OCI-LY7 (cell line): ENCODE measurements at regions of chr6 and their contacts with region 1.

Region 1: GRCh38 chr6:13336553-13336952 is 8.2 kb upstream of the TBC1D7 start:
- DNase-seq: peak; percentile 74
- H3K4me3 ChIP-seq: no peak overlapping the region
- H3K27ac ChIP-seq: no peak overlapping the region
- H3K4me1 ChIP-seq: peaks cover 25% of the 10 kb centered on the region
- CTCF ChIP-seq: peak; percentile 96

Region 2: GRCh38 chr6:13375360-13375878 is 38.9 kb after region 1 on chr6:
- CTCF ChIA-PET with region 1: no interaction called
- POLR2A ChIA-PET with region 1: interaction called, 4 read pairs
- intact Hi-C with region 1: loop called (anchors 2 kb)
- DNase-seq: peak; percentile 72
- H3K4me3 ChIP-seq: peak overlapping the region; percentile 13
- H3K27ac ChIP-seq: peak overlapping the region; percentile 30
- H3K4me1 ChIP-seq: peaks cover 59% of the 10 kb centered on the region
- CTCF ChIP-seq: no peak

Region 3: GRCh38 chr6:13407709-13408695 is 71.4 kb after region 1 on chr6:
- CTCF ChIA-PET with region 1: no interaction called
- POLR2A ChIA-PET with region 1: no interaction called
- intact Hi-C with region 1: no loop called
- DNase-seq: no peak
- H3K4me3 ChIP-seq: no peak overlapping the region
- H3K27ac ChIP-seq: no peak overlapping the region
- H3K4me1 ChIP-seq: no peaks in the 10 kb centered on the region
- CTCF ChIP-seq: no peak

Region 4: DNA sequence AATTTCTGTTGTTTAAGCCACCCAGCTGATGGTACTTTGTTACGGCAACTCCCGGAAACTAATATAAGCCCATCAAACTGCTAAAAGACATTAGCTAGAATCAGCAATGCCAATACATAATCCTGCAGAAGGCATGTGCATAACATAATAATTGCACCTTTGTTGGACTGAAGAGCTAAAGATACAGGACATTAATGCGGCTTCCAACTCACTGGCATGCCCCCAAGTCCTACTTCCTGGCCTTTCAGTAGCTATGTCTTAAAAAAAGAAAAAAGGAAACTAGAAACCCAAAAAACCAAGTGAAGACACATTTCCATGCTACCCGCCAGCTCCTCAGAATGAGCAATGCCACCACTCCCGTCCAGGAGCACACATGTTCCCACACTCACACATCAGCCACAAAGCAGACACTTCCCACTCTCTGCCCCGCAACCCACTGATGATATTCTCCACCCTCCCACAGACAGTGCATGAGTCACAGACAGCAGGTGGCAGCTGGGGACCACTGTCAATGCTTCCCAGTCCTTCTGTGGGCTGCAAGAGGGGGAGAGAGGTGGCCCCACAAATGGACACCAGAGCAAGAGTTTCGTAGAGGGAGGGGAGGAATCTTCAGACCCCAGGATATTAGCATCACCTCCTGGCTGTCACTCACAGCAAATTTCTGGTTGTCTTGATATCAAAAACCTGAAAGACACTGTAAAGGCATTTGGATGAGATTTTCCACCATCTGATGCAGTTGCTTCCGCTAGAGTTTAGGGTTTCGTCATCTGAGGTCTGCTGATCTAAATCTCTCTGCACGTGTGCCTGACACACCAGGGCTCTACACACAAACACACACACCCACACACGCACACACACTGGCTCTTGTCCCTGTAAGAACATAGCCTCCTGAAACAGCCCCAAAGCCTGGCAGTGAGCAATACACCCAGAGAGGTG is 118.0 kb after region 1 on chr6:
- CTCF ChIA-PET with region 1: interaction called, 3 read pairs
- POLR2A ChIA-PET with region 1: interaction called, 5 read pairs
- intact Hi-C with region 1: loop called (anchors 2 kb)
- DNase-seq: peak; percentile 41
- H3K4me3 ChIP-seq: peak overlapping the region; percentile 6
- H3K27ac ChIP-seq: peak overlapping the region; percentile 28
- H3K4me1 ChIP-seq: peaks cover 60% of the 10 kb centered on the region
- CTCF ChIP-seq: peak; percentile 68

Region 5: DNA sequence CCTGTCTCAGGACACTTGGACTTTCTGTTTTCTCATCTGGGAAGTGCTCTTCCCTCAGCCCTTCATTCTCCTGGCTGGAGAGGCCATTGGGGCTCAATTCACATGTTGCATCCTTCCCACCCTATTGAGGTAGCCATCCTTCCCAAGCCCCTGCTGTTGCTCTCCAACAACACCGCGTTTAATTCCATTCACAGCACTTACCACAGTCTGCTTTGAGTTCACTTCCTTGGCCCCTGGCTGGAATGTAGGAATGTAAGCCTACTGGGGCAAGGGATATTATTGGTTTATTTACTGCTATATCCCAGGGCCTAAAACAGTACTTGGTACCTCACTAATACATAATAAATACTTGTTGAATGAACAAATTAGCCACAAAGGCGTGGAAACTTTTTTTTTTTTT is 157.6 kb after region 1 on chr6:
- CTCF ChIA-PET with region 1: no interaction called
- POLR2A ChIA-PET with region 1: no interaction called
- intact Hi-C with region 1: no loop called
- DNase-seq: no peak
- H3K4me3 ChIP-seq: no peak overlapping the region
- H3K27ac ChIP-seq: no peak overlapping the region
- H3K4me1 ChIP-seq: no peaks in the 10 kb centered on the region
- CTCF ChIP-seq: no peak

Region 6: DNA sequence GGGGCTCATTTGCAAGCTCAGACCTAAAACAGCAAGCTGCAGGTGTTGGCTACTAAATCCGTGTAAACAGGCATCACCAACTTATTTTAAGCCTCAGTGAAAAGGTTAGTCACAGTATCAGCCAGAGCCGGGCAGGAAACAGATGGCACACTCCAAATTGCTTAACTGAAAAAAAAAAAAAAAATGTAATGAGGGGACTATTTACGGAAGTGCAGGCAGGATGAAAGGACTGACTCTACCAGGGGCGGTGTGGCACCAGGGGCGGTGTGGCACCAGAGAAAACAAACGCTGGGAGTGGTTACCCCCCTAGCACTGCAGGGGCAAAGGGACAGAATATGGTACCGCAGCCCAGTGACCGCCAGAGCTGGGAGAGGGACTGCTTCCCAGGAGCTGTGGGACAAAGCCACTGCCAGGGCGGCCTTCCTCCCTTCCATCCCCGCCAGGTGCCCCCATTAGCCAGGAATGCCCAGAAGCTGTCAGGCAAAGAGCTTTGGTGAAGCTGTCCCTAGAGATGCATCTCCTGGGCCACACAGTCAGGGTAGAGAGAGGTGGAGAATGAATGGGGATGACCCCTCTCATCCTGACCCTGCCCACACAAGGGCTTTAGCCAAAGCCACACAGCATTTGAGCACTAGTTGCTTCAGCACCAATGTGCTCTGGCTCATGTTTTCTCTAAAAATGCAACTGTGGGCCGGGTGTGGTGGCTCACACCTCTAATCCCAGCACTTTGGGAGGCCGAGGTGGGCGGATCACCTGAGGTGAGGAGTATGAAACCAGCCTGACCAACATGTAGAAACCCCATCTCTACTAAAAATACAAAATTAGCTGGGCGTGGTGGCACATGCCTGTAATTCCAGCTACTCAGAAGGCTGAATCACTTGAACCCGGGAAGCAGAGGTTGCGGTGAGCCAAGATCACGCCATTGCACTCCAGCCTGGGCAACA is 190.4 kb after region 1 on chr6:
- CTCF ChIA-PET with region 1: no interaction called
- POLR2A ChIA-PET with region 1: interaction called, 5 read pairs
- intact Hi-C with region 1: loop called (anchors 2 kb)
- DNase-seq: peak; percentile 98
- H3K4me3 ChIP-seq: peak overlapping the region; percentile 59
- H3K27ac ChIP-seq: peak overlapping the region; percentile 99
- H3K4me1 ChIP-seq: peaks cover 84% of the 10 kb centered on the region
- CTCF ChIP-seq: peak; percentile 55

Region 7: DNA sequence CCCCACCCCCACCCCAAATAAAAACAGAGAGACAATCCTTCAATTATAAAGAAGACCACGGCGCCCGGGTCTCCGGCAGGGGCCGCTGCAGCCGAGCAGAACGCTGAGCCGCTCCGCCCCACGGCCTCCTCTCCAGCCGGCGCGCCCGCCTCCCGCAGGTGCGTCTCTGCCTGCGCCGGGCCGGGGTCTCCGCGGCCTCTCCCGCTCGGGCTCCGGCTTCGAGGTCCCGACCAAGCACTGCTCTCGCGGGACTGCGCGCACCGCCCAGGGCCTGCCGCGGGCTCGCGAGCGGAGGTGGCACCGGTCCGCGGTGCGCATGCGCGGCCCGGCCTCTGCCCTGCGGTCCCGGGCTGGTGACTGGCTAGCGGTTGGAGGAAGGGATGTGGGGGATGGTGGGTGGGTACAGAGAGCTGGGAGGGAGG is 237.6 kb after region 1 on chr6:
- CTCF ChIA-PET with region 1: no interaction called
- POLR2A ChIA-PET with region 1: interaction called, 4 read pairs
- intact Hi-C with region 1: loop called (anchors 1 kb)
- DNase-seq: peak; percentile 98
- H3K4me3 ChIP-seq: peak overlapping the region; percentile 76
- H3K27ac ChIP-seq: peak overlapping the region; percentile 89
- H3K4me1 ChIP-seq: peaks cover 23% of the 10 kb centered on the region
- CTCF ChIP-seq: peak; percentile 64

Region 8: DNA sequence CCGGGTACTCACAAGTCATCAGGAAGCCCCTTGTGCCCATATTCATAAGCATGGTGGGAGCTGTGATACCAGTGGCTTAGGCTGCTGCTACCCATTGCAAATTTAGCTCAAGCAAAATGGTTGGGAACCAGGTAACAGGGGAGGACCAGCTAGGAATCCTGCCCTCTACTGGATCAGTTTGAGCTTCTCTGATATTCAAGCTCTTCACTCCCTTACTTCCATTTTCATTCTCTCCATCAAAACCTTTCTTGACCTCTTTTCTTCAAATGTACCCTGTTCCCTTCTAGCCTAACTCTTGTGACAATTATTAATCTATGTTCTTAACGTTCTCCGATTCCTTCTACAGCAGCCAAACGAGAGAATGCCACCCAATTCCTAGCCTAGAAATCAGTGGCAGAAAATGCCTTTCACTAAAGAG is 288.3 kb after region 1 on chr6:
- CTCF ChIA-PET with region 1: no interaction called
- POLR2A ChIA-PET with region 1: no interaction called
- intact Hi-C with region 1: loop called (anchors 1 kb)
- DNase-seq: peak; percentile 67
- H3K4me3 ChIP-seq: no peak overlapping the region
- H3K27ac ChIP-seq: no peak overlapping the region
- H3K4me1 ChIP-seq: peaks cover 5% of the 10 kb centered on the region
- CTCF ChIP-seq: peak; percentile 86

Region 9: DNA sequence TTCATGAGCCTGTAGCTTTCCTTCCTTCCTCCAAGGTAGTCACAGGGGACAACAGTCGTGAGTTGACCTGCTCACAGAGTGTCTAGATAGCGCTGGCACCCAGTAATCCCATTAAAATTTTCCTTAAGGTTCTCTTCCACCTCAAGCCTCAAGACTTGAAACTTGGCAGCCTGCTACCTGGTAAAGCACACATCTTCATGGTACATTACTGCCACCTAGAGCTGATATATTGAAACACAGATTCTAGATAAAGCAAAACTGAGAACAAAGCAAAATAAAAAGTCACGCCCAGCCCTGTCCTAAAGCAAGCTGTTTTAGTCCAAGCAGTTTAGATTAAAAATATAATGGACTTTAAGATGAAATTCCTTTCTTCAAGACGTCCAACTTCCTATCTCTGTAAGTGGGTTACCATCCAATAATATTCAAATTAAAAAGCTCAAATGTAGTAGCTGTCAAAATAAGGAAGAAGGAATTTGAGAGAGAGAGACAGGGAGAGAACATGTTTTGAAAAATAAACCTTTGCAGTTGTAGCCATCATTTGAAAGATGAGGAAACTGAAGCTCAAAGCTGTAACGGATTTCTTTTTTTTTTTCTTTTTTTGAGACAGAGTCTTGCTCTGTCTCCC is 730.3 kb after region 1 on chr6:
- CTCF ChIA-PET with region 1: interaction called, 3 read pairs
- POLR2A ChIA-PET with region 1: interaction called, 3 read pairs
- intact Hi-C with region 1: loop called (anchors 2 kb)
- DNase-seq: peak; percentile 75
- H3K4me3 ChIP-seq: no peak overlapping the region
- H3K27ac ChIP-seq: no peak overlapping the region
- H3K4me1 ChIP-seq: peaks cover 3% of the 10 kb centered on the region
- CTCF ChIP-seq: peak; percentile 93